ENCODE measurements at regions of chr7 and their contacts with region 1.

Region 1: GRCh38 chr7:4641667-4642467 is 40.2 kb upstream of the FOXK1 start:
- DNase-seq: peak; percentile 100
- H3K4me3 ChIP-seq: peak overlapping the region; percentile 60 to 72
- H3K27ac ChIP-seq: peak overlapping the region; percentile 72 to 78
- H3K4me1 ChIP-seq: no peaks in the 10 kb centered on the region; a peak in 1 of 4 replicates
- H3K27me3 ChIP-seq: no peaks in the 10 kb centered on the region
- CTCF ChIP-seq: peak; percentile 48
- EP300 ChIP-seq: peak in 1 of 2 experiments; percentile 48; a peak in 1 of 4 replicates
- RAD21 ChIP-seq: peak; percentile 25; the same call in 1 of the 2 replicates

Region 2: DNA sequence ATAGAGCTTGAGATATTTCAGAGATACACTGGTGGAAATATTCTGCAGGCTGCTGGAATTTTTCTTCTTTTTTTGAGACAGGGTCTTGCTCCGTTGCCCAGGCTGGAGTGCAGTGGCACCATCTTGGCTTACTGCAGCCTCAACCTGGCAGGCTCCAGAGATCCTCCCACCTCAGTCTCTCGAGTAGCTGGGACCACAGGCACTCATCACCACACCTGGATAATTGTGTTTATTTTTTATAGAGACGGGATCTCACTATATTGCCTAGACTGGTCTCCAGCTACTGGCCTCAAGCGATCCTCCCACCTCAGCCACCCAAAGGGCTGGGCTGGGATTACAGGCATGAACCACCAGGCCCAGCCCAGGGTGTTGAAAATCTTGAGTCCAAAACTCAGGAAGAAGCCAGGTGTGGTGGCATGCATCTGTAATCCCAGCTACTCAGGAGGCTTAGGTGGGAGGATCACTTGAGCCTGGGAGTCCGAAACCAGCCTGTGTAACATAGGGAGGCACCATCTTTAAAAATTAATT is 15.5 kb before region 1 on chr7:
- CTCF ChIA-PET with region 1: interaction called, 22 read pairs
- POLR2A ChIA-PET with region 1: interaction called, 5 read pairs
- DNase-seq: no peak
- H3K4me3 ChIP-seq: no peak overlapping the region
- H3K27ac ChIP-seq: no peak overlapping the region
- H3K4me1 ChIP-seq: peaks cover 0 to 1% of the 10 kb centered on the region in 2 experiments; a peak in 1 of 4 replicates
- H3K27me3 ChIP-seq: no peaks in the 10 kb centered on the region
- CTCF ChIP-seq: no peak
- EP300 ChIP-seq: no peak
- RAD21 ChIP-seq: no peak

Region 3: GRCh38 chr7:4667776-4668509 is 26.1 kb after region 1 on chr7:
- CTCF ChIA-PET with region 1: interaction called, 9 read pairs
- POLR2A ChIA-PET with region 1: interaction called, 11 read pairs
- DNase-seq: no peak
- H3K4me3 ChIP-seq: no peak overlapping the region
- H3K27ac ChIP-seq: peak overlapping the region in 1 of 2 experiments; percentile 88; a peak in 2 of 4 replicates
- H3K4me1 ChIP-seq: peaks cover 0 to 5% of the 10 kb centered on the region in 2 experiments; a peak in 2 of 4 replicates
- H3K27me3 ChIP-seq: no peaks in the 10 kb centered on the region
- CTCF ChIP-seq: no peak
- EP300 ChIP-seq: no peak
- RAD21 ChIP-seq: no peak

Region 4: GRCh38 chr7:4681886-4682620 is 40.2 kb after region 1 on chr7 and contains the start of gene FOXK1:
- CTCF ChIA-PET with region 1: interaction called, 49 read pairs
- POLR2A ChIA-PET with region 1: interaction called, 68 read pairs
- DNase-seq: peak; percentile 99
- H3K4me3 ChIP-seq: peak within 1 kb of the TSS; percentile 70 to 96
- H3K27ac ChIP-seq: peak within 1 kb of the TSS; percentile 61 to 65
- H3K4me1 ChIP-seq: peaks cover 6 to 18% of the 10 kb centered on the region in 2 experiments; a peak in 1 of 4 replicates
- H3K27me3 ChIP-seq: no peaks in the 10 kb centered on the region
- CTCF ChIP-seq: no peak
- EP300 ChIP-seq: no peak; a peak in 1 of 4 replicates
- RAD21 ChIP-seq: peak; percentile 11; the same call in 1 of the 2 replicates
- polyA plus RNA-seq, gene FOXK1: 3.0 and 4.7 TPM in 2 replicates